ENCODE measurements at regions of chr10 and their contacts with region 1.

Region 1: DNA sequence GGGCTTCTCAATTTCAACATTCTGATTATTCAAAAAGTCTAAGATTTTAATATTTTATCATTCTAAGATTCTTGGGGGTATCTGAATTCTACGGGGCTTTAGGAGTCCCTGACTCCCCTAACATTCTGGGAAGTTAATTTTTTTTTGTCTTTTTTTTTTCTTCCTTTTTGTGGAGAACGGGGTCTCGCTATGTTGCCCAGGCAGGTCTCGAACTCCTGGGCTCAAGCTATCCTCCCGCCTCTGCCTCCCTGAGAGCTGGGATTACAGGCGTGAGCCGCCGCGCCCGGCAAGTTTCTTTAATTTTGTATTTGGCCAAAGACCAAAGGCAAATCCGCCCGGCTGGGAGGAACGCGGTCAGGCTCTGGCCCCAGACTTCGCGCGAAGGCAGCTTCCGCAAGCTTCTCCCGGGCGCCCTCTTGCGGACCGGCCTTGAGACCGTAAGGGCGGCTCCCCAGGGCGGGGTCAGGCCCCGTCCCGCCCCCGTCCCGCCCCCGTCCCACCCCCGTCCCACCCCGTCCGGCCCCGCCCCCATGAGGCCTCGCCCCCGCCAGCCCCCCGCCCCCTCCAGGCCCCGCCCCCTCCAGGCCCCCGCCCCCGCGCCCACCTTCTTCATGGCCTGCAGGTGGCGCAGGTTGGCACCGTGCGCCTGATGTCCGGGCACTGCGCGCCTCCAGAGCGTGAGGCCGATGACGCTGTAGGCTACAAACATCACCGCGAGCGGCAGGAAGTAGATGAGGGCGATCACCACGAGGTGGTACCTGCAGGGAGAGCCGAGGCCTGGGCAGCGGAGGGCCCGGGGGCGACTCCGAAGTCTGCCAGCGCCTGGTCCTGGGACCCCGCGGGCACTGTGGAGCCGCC is 8.2 kb downstream of the TACR2 start:
- DNase-seq: peak; percentile 82 to 92 (median 90)
- ATAC-seq: peak; percentile 94
- H3K4me3 ChIP-seq: peak overlapping the region; percentile 54
- H3K4me3 Mint-ChIP-seq: peak overlapping the region; percentile 65 to 83 (median 74)
- H3K27ac ChIP-seq: peak overlapping the region; percentile 76
- H3K27ac Mint-ChIP-seq: peak overlapping the region; percentile 82 to 96 (median 92)
- H3K4me1 ChIP-seq: peaks cover 13 to 14% of the 10 kb centered on the region in 2 donors
- H3K4me1 Mint-ChIP-seq: peaks cover 14 to 28% (median 20%) of the 10 kb centered on the region in 7 donors
- H3K27me3 ChIP-seq: no peaks in the 10 kb centered on the region
- H3K27me3 Mint-ChIP-seq: no peaks in the 10 kb centered on the region

Region 2: DNA sequence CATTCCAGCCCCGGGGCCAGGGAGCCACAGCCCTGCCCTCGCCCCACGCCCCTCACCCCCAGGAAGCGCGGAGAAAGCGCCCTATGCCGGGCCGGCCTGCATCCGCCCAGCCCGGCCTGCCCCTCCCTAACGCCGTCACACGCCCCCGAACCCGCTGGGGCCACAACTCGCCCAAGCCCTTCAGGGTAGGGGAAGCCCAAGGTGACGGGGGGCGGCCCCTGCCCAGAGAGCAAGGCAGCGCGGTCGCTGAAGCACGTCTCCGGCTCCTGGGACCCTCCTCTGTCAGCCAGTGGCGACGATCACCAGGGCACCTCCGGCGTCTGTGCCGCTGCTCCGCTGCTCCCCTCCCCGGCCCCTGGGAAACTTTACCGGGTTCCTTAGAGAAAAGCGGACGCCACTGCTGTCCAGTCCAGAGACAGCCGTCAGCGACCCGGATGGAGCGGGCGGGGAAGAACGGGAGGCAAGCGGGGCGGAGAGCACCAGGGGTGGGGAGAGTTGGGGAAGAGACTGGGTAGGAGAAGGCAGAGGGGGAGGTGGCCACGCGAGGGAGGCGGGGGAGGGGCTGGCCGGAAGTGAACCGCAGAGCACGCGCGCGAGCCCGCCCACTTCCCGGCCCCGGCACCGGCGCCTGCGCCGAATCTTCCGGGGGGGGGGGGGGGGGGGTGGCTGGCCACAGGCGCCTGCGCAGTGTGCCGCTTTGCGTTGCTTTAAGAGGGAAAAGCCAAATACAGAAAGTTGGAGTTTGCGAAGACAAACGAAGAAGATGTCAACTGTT is 1333.6 kb before region 1 on chr10 and contains the start of gene HERC4:
- CTCF ChIA-PET with region 1: no interaction called
- POLR2A ChIA-PET with region 1: no interaction called
- intact Hi-C with region 1: loop called in 1 of 2 experiments (anchors 5 kb)
- DNase-seq: peak; percentile 80 to 91 (median 89)
- ATAC-seq: peak; percentile 97
- H3K4me3 ChIP-seq: peak within 1 kb of the TSS; percentile 91
- H3K4me3 Mint-ChIP-seq: peak within 1 kb of the TSS; percentile 91 to 98 (median 96)
- H3K27ac ChIP-seq: peak within 1 kb of the TSS; percentile 96
- H3K27ac Mint-ChIP-seq: peak within 1 kb of the TSS; percentile 89 to 95 (median 94)
- H3K4me1 ChIP-seq: peaks cover 15 to 21% of the 10 kb centered on the region in 2 donors
- H3K4me1 Mint-ChIP-seq: peaks cover 26 to 51% (median 41%) of the 10 kb centered on the region in 7 donors
- H3K27me3 ChIP-seq: peaks cover 0 to 3% of the 10 kb centered on the region in 2 donors
- H3K27me3 Mint-ChIP-seq: peaks cover 0 to 2% (median 0%) of the 10 kb centered on the region in 5 donors
- total RNA-seq, gene HERC4: 65.7 to 113 (median 78.6) TPM

Region 3: GRCh38 chr10:69237528-69238159 is 170.9 kb before region 1 on chr10:
- CTCF ChIA-PET with region 1: interaction called, 12 read pairs
- POLR2A ChIA-PET with region 1: no interaction called
- intact Hi-C with region 1: loop called (anchors 1 kb)
- DNase-seq: peak; percentile 67 to 88 (median 79)
- ATAC-seq: peak; percentile 93
- H3K4me3 ChIP-seq: no peak overlapping the region
- H3K4me3 Mint-ChIP-seq: peak overlapping the region in 4 of 10 donors; percentile 9 to 36 (median 10)
- H3K27ac ChIP-seq: no peak overlapping the region
- H3K27ac Mint-ChIP-seq: peak overlapping the region in 6 of 9 donors; percentile 2 to 78 (median 20)
- H3K4me1 ChIP-seq: peaks cover 4 to 6% of the 10 kb centered on the region in 2 donors
- H3K4me1 Mint-ChIP-seq: peaks cover 8 to 37% (median 23%) of the 10 kb centered on the region in 7 donors
- H3K27me3 ChIP-seq: no peaks in the 10 kb centered on the region
- H3K27me3 Mint-ChIP-seq: no peaks in the 10 kb centered on the region

Region 4: GRCh38 chr10:69425511-69426298 is 17.2 kb after region 1 on chr10:
- CTCF ChIA-PET with region 1: interaction called, 9 read pairs
- POLR2A ChIA-PET with region 1: interaction called, 13 read pairs
- intact Hi-C with region 1: loop called in 1 of 2 experiments (anchors 1 kb)
- DNase-seq: peak in 7 of 9 donors; percentile 60 to 82 (median 74)
- ATAC-seq: peak; percentile 90
- H3K4me3 ChIP-seq: peak overlapping the region; percentile 22
- H3K4me3 Mint-ChIP-seq: peak overlapping the region; percentile 4 to 64 (median 36)
- H3K27ac ChIP-seq: peak overlapping the region; percentile 54
- H3K27ac Mint-ChIP-seq: peak overlapping the region; percentile 45 to 92 (median 88)
- H3K4me1 ChIP-seq: peaks cover 29 to 46% of the 10 kb centered on the region in 2 donors
- H3K4me1 Mint-ChIP-seq: peaks cover 40 to 66% (median 55%) of the 10 kb centered on the region in 7 donors
- H3K27me3 ChIP-seq: no peaks in the 10 kb centered on the region
- H3K27me3 Mint-ChIP-seq: peaks cover 0 to 7% (median 0%) of the 10 kb centered on the region in 5 donors

Region 5: GRCh38 chr10:69629897-69630650 is 221.5 kb after region 1 on chr10 and contains the start of gene FAM241B:
- CTCF ChIA-PET with region 1: interaction called, 3 read pairs
- POLR2A ChIA-PET with region 1: no interaction called
- intact Hi-C with region 1: loop called in 1 of 2 experiments (anchors 1 kb)
- DNase-seq: peak; percentile 60 to 82 (median 75)
- ATAC-seq: peak; percentile 99
- H3K4me3 ChIP-seq: peak within 1 kb of the TSS; percentile 50
- H3K4me3 Mint-ChIP-seq: peak within 1 kb of the TSS; percentile 68 to 85 (median 79)
- H3K27ac ChIP-seq: peak within 1 kb of the TSS; percentile 67
- H3K27ac Mint-ChIP-seq: peak within 1 kb of the TSS; percentile 53 to 88 (median 79)
- H3K4me1 ChIP-seq: peaks cover 13 to 26% of the 10 kb centered on the region in 2 donors
- H3K4me1 Mint-ChIP-seq: peaks cover 3 to 55% (median 36%) of the 10 kb centered on the region in 7 donors
- H3K27me3 ChIP-seq: no peaks in the 10 kb centered on the region
- H3K27me3 Mint-ChIP-seq: no peaks in the 10 kb centered on the region
- total RNA-seq, gene FAM241B: 8.6 to 13.9 (median 12.4) TPM

Measured in naive thymus-derived CD4-positive, alpha-beta T cell (primary cell).